ENCODE measurements at regions of chr11 and their contacts with region 1.

Region 1: DNA sequence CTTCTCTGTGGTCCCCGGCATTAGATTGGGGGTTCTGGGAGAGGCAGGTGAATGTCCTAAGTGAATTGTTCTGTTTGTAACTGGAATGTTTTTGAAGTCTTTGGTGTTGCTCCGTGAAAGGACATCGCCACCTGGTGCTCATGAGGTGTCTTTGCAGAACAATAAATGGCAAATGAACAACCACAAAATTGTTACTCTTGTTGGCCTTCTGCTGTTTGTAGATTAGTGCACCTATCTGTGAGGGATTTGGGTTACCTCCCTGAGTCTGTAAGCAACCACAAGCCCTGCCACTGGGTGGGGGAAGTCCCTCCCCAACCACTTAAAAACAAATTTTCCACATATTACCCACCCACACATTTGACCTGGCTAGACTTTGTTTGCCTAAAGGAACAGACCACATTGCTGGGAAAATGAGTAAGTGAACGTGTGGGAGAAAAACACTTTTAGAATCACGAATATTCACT is 4.7 kb downstream of the MPEG1 start:
- DNase-seq: peak in 3 of 5 donors; percentile 37 to 63 (median 44)
- H3K4me3 ChIP-seq: no peak overlapping the region
- H3K27ac ChIP-seq: peak overlapping the region in 1 of 2 donors; percentile 54
- H3K4me1 ChIP-seq: no peaks in the 10 kb centered on the region
- H3K27me3 ChIP-seq: no peaks in the 10 kb centered on the region
- CTCF ChIP-seq: peak; percentile 60 to 76 (median 73)
- EP300 ChIP-seq: no peak
- POLR2A ChIP-seq: no peak

Region 2: DNA sequence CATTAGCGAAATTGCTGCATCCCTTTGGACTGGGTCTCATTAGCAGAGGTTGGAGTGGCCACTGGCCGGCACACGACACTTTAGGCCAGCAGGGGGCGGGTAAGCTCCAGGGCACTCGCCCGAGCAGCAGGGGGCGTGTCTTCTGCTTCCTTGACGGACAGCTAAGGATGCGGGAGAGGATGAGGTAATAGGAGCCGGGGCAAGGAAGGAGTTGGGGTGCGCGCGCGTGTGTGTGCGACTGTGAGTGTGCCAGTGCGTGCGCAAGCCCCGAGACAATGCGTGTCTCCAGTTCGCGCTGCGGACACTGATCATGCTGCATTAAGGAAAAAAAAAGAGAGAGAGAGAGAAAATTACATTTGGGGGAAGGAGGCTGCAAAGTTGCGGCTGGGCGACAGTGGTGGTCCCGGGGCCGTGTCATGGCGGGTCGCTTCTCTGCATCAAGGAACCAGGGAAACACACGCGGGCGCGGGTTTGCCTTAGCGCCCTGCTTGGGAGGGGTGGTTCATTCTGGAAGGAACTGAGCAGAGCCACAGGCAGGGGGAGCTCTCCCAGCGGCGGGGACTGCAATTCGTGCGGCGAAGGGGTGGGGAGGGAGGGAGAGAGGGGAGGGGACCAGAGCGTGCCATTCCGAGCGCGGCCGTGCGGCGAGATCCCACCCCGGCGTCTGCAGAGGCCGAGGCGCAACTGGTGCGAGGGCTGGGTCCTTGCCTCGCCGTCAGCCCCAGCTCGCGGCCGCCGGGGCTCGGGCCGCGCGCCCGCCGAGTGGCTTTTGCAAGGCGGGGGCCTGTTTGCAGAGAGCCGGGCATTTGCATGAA is 36.3 kb before region 1 on chr11 and contains the start of gene DTX4:
- intact Hi-C with region 1: loop called (anchors 2 to 5 kb)
- DNase-seq: peak; percentile 92 to 96 (median 95)
- H3K4me3 ChIP-seq: peak within 1 kb of the TSS; percentile 68
- H3K27ac ChIP-seq: peak within 1 kb of the TSS; percentile 73 to 80
- H3K4me1 ChIP-seq: peaks cover 22% of the 10 kb centered on the region
- H3K27me3 ChIP-seq: no peaks in the 10 kb centered on the region
- CTCF ChIP-seq: peak; percentile 93 to 95 (median 94)
- EP300 ChIP-seq: no peak
- POLR2A ChIP-seq: peak; percentile 20
- total RNA-seq, gene DTX4: 6.1 to 20.3 (median 16.8) TPM

Region 3: GRCh38 chr11:59283825-59284772 is 76.1 kb after region 1 on chr11:
- intact Hi-C with region 1: loop called in 1 of 4 experiments (anchors 10 kb)
- DNase-seq: peak in 2 of 5 donors; percentile 33 to 57
- H3K4me3 ChIP-seq: no peak overlapping the region
- H3K27ac ChIP-seq: no peak overlapping the region
- H3K4me1 ChIP-seq: no peaks in the 10 kb centered on the region
- H3K27me3 ChIP-seq: no peaks in the 10 kb centered on the region
- CTCF ChIP-seq: peak; percentile 59 to 75 (median 70)
- EP300 ChIP-seq: no peak
- POLR2A ChIP-seq: no peak